Activated T-helper 1 cell treated with anti-CD3 and anti-CD28 coated beads, Interleukin-12 subunit alpha, Interleukin-12 subunit beta, Interleukin-2, Interleukin-4 antibody, amounts not matched to agents 30 ng/mL and 10 ng/mL and 1 ng/mL, durations not matched to agents 14 hours and 24 hours and 36 hours (primary cell): ENCODE measurements at regions of chr2 and their contacts with region 1.

Region 1: GRCh38 chr2:241844066-241844728 is 14.5 kb downstream of the PDCD1 start:
- DNase-seq: peak; percentile 79
- H3K4me3 Mint-ChIP-seq: peak overlapping the region; percentile 43
- H3K27ac Mint-ChIP-seq: peak overlapping the region; percentile 95
- H3K4me1 Mint-ChIP-seq: peaks cover 27% of the 10 kb centered on the region
- H3K27me3 Mint-ChIP-seq: peaks cover 8% of the 10 kb centered on the region

Region 2: DNA sequence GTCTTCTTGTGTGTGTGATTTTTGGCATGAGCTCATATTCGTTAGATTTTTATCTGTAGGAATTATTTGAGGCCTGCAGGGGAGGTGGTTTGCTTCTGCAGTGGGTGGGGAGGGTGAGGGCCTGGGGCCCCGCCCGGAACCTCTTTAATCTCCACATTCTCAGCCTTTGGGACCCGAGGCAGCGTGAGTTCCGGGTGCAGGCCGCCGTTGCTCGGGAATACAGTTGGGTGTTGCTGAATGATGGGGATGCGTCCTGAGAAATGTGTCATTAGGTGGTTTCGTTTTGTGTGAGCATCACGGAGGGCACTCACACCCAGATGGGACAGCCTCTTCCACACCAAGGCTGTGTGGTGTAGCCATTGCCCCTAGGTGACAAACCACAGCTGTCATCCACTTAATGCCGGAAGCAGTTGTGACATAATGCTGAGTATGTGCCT is 81.2 kb before region 1 on chr2:
- intact Hi-C with region 1: loop called (anchors 5 kb)
- DNase-seq: peak; percentile 14
- H3K4me3 Mint-ChIP-seq: no peak overlapping the region
- H3K27ac Mint-ChIP-seq: peak overlapping the region; percentile 77
- H3K4me1 Mint-ChIP-seq: peaks cover 13% of the 10 kb centered on the region
- H3K27me3 Mint-ChIP-seq: no peaks in the 10 kb centered on the region

Region 3: DNA sequence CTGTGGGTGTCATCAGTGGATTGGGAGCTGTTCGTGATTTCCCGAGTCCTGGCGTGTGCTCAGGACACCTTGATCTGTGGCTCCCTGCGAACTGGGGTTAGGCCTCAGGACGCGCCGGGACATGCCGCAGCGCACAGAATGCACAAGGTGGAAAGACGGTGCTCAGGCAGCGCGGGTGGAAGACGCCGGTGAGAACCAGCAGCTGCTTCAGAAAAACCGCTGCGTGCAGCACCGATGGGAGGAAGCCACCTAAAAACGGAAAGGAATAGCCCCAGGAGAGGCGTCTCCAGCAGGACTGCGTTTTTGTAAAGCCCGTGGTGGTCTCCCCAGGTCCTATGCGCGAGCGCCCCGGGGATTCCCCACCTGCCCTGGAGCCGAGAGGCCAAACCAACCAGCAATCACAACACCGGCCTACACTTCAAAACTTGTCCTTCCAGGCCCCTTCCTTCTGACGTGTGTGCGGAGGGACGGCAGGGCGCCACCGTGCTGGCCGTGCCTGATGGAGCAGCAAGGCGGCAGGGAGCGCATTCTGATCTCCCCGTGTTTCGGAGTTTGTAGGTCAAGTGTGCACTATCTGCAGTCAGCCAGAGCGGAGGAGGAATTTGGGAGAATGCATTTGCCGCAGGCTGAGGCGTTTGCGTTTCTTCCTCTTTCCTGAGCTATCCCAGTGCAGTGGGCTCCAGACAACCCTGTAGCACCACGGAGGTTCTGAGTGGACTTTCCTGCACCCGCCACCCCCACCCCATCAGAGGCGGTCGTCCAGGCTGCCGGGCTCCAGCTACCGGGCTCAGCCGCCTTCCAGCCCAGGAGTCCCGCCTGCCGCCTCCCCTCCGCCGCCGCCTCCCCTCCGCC is 57.5 kb after region 1 on chr2:
- intact Hi-C with region 1: no loop called
- DNase-seq: no peak
- H3K4me3 Mint-ChIP-seq: no peak overlapping the region
- H3K27ac Mint-ChIP-seq: no peak overlapping the region
- H3K4me1 Mint-ChIP-seq: no peaks in the 10 kb centered on the region
- H3K27me3 Mint-ChIP-seq: peaks cover 1% of the 10 kb centered on the region